ENCODE measurements at regions of chr17 and their contacts with region 1.

Region 1: GRCh38 chr17:40098846-40099618 is 1.4 kb downstream of the NR1D1 start:
- DNase-seq: peak; percentile 95
- ATAC-seq: peak; percentile 64
- H3K4me3 Mint-ChIP-seq: peak overlapping the region; percentile 91
- H3K27ac Mint-ChIP-seq: peak overlapping the region; percentile 90
- H3K4me1 Mint-ChIP-seq: peaks cover 70% of the 10 kb centered on the region
- H3K27me3 Mint-ChIP-seq: no peaks in the 10 kb centered on the region
- CTCF ChIP-seq: no peak

Region 2: DNA sequence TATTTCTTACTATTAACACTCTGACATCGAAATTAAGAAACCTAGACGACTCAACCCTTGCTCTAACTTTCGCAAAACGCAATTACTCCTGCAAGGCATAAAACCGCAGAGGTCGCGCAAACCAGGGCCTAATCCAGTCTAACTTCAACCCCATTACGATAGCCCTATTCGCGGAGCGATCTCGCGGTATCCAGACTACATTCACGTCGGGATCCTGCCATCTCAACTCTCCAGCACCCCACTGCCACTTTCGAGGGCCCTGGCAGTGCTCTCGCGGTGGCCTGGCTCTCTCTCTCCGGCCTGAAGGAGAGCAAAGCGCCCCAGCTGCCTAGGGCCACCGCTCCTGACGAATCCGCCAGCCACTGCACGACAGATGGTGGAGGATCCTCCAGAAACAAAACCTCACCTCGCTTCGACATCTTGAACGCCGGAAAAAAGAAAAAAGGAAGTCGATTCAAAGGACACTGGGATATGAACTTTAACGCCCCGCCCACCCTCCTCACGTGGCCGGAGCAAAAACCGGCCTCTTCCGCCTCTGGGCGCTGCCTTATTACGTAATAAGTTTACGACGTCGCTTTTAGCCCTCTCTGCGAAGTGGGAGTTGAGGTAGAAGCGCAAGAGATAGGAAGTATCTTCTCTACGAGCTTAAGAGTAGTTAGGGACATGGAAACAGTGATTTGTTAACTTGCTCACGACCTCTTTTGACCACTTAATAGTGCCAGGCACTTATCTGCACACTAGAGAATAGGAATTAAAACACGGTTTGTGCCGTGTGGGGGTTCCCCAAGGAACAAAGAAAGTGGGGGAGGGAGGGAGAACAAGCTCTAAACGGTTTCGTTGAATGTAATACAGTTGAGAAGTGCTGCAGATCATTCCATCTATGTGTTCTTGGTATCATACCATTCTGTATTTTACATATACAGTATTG is 1245.5 kb before region 1 on chr17 and contains the start of gene RPL23:
- CTCF ChIA-PET with region 1: no interaction called
- POLR2A ChIA-PET with region 1: interaction called, 3 read pairs
- intact Hi-C with region 1: loop called (anchors 5 kb)
- DNase-seq: peak; percentile 79
- ATAC-seq: peak; percentile 86
- H3K4me3 Mint-ChIP-seq: peak within 1 kb of the TSS; percentile 99
- H3K27ac Mint-ChIP-seq: peak within 1 kb of the TSS; percentile 100
- H3K4me1 Mint-ChIP-seq: peaks cover 43% of the 10 kb centered on the region
- H3K27me3 Mint-ChIP-seq: no peaks in the 10 kb centered on the region
- CTCF ChIP-seq: no peak
- total RNA-seq, gene RPL23: 2,652 and 3,293 TPM in 2 replicates

Region 3: GRCh38 chr17:39835038-39835786 is 263.8 kb before region 1 on chr17:
- CTCF ChIA-PET with region 1: no interaction called
- POLR2A ChIA-PET with region 1: no interaction called
- intact Hi-C with region 1: no loop called
- DNase-seq: no peak
- ATAC-seq: no peak
- H3K4me3 Mint-ChIP-seq: no peak overlapping the region
- H3K27ac Mint-ChIP-seq: peak overlapping the region; percentile 76
- H3K4me1 Mint-ChIP-seq: peaks cover 49% of the 10 kb centered on the region
- H3K27me3 Mint-ChIP-seq: no peaks in the 10 kb centered on the region
- CTCF ChIP-seq: no peak

Region 4: GRCh38 chr17:39952680-39953470 is 146.2 kb before region 1 on chr17:
- CTCF ChIA-PET with region 1: no interaction called
- POLR2A ChIA-PET with region 1: no interaction called
- intact Hi-C with region 1: loop called (anchors 2 kb)
- DNase-seq: peak; percentile 88
- ATAC-seq: peak; percentile 85
- H3K4me3 Mint-ChIP-seq: peak overlapping the region; percentile 85
- H3K27ac Mint-ChIP-seq: peak overlapping the region; percentile 83
- H3K4me1 Mint-ChIP-seq: peaks cover 29% of the 10 kb centered on the region
- H3K27me3 Mint-ChIP-seq: no peaks in the 10 kb centered on the region
- CTCF ChIP-seq: no peak

Region 5: DNA sequence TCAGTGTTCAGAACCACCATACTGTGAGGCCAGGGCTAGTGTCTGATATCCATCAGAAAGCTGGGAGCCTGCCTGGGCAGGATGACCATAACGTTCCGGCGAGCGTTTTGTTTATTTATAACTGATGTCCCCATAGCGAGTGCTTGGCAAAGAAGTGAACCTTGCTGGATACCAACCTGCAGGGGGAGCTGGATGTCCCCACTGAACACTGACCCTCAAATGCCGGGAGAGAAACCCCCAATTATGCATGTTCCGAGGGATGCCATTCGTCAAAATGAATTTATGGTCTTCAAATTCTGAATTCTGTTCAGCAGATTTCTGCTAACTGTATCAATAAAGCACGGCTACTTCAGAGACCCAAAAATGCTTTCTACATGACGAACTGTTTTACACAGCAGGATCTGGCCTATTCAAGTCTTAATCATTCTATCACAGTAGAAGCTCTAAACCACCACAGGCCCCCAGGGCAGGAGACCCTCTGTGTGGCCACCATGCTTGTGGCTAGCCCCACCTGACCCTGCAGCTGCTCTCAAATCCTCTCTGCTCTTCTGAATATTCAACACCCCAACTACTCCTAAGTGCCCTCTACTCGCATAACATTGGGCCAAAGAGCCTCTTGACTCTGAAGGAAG is 60.0 kb before region 1 on chr17:
- CTCF ChIA-PET with region 1: no interaction called
- POLR2A ChIA-PET with region 1: no interaction called
- intact Hi-C with region 1: no loop called
- DNase-seq: no peak
- ATAC-seq: no peak
- H3K4me3 Mint-ChIP-seq: no peak overlapping the region
- H3K27ac Mint-ChIP-seq: no peak overlapping the region
- H3K4me1 Mint-ChIP-seq: no peaks in the 10 kb centered on the region
- H3K27me3 Mint-ChIP-seq: no peaks in the 10 kb centered on the region
- CTCF ChIP-seq: no peak

Region 6: GRCh38 chr17:40075201-40075941 is 23.7 kb before region 1 on chr17:
- CTCF ChIA-PET with region 1: interaction called, 9 read pairs
- POLR2A ChIA-PET with region 1: interaction called, 7 read pairs
- intact Hi-C with region 1: loop called (anchors 1 kb)
- DNase-seq: peak; percentile 52
- ATAC-seq: peak; percentile 96
- H3K4me3 Mint-ChIP-seq: no peak overlapping the region
- H3K27ac Mint-ChIP-seq: peak overlapping the region; percentile 16
- H3K4me1 Mint-ChIP-seq: peaks cover 29% of the 10 kb centered on the region
- H3K27me3 Mint-ChIP-seq: no peaks in the 10 kb centered on the region
- CTCF ChIP-seq: peak; percentile 61

Region 7: GRCh38 chr17:40113110-40113906 is 14.3 kb after region 1 on chr17:
- CTCF ChIA-PET with region 1: interaction called, 79 read pairs
- POLR2A ChIA-PET with region 1: interaction called, 113 read pairs
- intact Hi-C with region 1: loop called (anchors 1 kb)
- DNase-seq: peak; percentile 80
- ATAC-seq: peak; percentile 87
- H3K4me3 Mint-ChIP-seq: peak overlapping the region; percentile 89
- H3K27ac Mint-ChIP-seq: peak overlapping the region; percentile 88
- H3K4me1 Mint-ChIP-seq: peaks cover 54% of the 10 kb centered on the region
- H3K27me3 Mint-ChIP-seq: no peaks in the 10 kb centered on the region
- CTCF ChIP-seq: no peak

Region 8: DNA sequence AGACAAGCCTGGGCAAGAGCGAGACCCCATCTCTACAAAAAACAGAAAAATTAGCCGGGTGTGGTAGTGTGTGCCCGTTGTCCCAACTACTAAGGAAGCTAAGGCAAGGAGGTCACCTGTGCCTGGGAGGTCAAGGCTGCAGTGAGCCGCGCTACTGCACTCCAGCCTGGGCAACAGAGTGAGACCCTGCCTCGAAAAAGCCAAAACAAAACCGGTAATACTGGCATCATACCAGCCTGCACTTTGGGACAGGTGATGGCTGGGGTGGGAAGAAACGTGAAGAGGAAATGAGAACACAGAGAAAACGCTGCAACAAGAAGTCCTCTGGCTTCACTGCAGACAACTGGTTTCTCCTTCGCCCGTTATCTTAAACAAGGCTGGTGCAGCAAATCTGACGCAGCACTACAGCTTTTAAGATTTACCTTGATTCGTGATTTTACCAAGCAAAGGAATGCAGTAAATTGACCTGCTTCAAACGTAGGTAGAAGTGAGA is 40.6 kb after region 1 on chr17:
- CTCF ChIA-PET with region 1: interaction called, 4 read pairs
- POLR2A ChIA-PET with region 1: interaction called, 38 read pairs
- intact Hi-C with region 1: loop called (anchors 1 kb)
- DNase-seq: peak; percentile 20
- ATAC-seq: peak; percentile 19
- H3K4me3 Mint-ChIP-seq: peak overlapping the region; percentile 93
- H3K27ac Mint-ChIP-seq: peak overlapping the region; percentile 92
- H3K4me1 Mint-ChIP-seq: peaks cover 29% of the 10 kb centered on the region
- H3K27me3 Mint-ChIP-seq: no peaks in the 10 kb centered on the region
- CTCF ChIP-seq: no peak

Region 9: DNA sequence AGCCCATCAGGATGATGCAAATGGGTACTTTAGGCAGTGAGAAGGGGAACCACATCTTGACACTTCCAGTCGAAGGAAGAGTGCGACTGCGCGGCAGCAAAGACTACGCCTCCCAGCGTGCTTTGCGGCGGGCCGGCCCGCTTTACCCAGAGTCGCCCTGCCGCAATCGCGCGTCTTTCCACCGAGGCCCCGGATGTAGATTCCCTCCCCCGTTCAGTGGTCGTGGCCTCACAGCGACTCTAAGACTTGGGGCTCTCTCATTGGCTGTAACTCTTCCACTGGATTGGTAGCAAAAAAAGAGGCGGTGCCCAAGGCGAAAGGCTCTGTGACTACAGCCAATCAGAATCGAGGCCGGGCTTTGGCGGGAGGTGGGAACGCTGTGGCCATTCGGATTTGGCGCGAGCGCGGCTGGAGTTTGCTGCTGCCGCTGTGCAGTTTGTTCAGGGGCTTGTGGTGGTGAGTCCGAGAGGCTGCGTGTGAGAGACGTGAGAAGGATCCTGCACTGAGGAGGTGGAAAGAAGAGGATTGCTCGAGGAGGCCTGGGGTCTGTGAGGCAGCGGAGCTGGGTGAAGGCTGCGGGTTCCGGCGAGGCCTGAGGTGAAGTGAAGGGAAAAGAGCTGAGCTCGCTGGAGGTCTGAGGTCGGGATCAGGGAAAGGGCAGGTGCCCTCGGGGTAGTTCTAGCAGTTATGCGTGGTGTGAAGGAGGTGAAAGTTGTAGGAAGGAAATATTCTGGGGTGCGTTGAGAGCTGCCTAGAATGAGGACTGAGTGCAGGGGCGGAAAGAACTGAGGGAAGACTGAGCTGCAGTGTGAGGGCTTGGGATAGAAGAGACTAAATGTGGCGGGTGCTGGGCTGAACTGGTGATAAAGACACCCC is 188.7 kb after region 1 on chr17 and contains the start of gene CDC6:
- CTCF ChIA-PET with region 1: no interaction called
- POLR2A ChIA-PET with region 1: no interaction called
- intact Hi-C with region 1: loop called (anchors 1 kb)
- DNase-seq: peak; percentile 93
- ATAC-seq: peak; percentile 95
- H3K4me3 Mint-ChIP-seq: peak within 1 kb of the TSS; percentile 97
- H3K27ac Mint-ChIP-seq: peak within 1 kb of the TSS; percentile 87
- H3K4me1 Mint-ChIP-seq: peaks cover 18% of the 10 kb centered on the region
- H3K27me3 Mint-ChIP-seq: no peaks in the 10 kb centered on the region
- CTCF ChIP-seq: no peak
- total RNA-seq, gene CDC6: 9.2 and 9.7 TPM in 2 replicates

Measured in activated B cell treated with CpG ODN at 0.5 μM for 24 hours (primary cell).